Heart right ventricle (tissue), 16 donors: ENCODE measurements at regions of chr3 and their contacts with region 1.

Region 1: DNA sequence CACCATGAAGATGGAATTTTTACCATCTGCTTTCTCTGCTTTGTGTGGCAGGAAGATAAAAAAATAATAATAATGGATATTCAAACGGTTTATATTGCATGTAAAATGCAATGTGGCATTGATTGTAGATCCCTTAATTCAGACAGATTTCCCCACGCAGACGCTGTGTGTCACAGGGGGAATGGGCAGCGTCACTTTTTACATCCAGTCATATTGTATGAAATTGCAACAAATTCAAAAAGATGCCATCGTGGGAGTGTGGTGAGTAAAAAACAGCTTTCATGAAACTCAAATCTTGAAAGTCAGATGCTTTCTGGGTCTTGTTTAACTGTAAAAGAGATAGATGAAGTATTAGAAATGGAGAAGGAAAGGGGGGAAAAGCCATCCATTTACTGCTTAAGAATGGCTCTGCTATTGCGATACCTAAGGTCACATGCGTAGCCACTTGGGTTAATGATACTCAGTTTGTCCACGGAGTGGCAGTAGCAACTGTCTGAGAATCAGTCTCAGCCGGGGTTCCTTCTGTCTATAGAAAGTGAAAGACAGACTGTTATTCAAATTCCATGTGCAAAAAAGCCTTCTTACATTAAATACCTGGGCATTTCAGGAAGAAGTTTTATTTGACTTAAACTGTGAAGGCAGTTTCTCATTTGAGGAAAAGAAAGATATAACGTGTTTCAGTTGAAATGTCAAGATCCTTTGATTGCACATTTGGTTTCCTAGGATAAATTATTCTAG is 28.5 kb downstream of the BTD start:
- DNase-seq: peak in 1 of 2 donors; percentile 74
- ATAC-seq: peak; percentile 81 to 95 (median 92)
- H3K4me3 ChIP-seq: peak overlapping the region in 7 of 10 donors; percentile 6 to 48 (median 33)
- H3K27ac ChIP-seq: peak overlapping the region in 6 of 10 donors; percentile 8 to 70 (median 51)
- H3K4me1 ChIP-seq: peaks cover 0 to 44% (median 31%) of the 10 kb centered on the region in 9 donors
- H3K27me3 ChIP-seq: no peaks in the 10 kb centered on the region
- CTCF ChIP-seq: peak; percentile 63 to 89 (median 75)

Region 2: DNA sequence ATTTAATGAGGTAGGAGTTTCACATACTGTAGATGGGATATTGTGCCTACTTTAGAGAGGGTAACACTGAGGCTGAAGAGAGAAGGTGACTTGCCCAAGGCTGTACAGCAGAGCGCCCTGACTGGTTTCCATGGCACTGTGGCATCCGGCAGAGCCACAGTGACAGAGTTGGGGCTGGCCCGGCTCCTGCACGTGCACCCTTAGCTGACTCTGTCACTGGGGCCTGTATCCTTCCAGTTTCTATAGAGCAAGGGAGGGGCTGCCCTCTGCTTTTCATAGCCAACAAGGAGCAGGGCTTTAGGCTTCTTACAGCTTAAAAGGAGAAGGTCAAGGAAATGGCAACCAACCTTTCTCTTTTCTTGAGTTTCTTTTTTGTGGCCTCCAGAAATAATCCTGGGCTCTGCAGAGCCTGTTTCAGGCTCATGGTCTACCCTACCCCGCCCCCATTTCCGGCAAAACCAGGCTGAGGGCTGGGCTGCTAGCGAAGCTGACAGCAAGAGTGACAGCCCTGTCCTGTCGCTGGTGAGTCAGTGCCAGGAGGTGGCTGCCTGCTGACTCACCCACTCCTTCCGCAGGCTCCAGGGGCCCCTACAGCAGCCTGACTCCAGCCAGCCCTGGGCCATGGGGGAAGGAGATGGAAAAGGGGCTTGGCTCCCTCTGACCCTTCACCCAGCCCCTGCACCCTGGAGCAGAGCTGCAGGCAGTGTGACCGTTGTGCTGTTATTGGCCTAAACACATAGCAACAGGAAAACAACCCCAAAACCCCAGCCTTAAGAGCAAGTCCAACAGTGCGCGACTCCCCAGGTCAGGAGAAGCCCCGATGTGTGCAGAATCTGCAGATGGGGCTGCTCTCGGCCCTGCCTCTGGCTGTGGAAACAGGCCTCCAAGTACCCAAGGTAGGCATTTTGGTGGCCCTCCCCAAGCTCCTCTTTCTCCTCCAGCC is 1197.9 kb before region 1 on chr3:
- intact Hi-C with region 1: no loop called
- DNase-seq: peak; percentile 85 to 86
- ATAC-seq: peak; percentile 71 to 93 (median 84)
- H3K4me3 ChIP-seq: peak overlapping the region in 1 of 10 donors; percentile 29
- H3K27ac ChIP-seq: peak overlapping the region in 9 of 10 donors; percentile 64 to 95 (median 72)
- H3K4me1 ChIP-seq: peaks cover 22 to 98% (median 71%) of the 10 kb centered on the region in 9 donors
- H3K27me3 ChIP-seq: peaks cover 0 to 16% (median 0%) of the 10 kb centered on the region in 7 donors
- CTCF ChIP-seq: no peak

Region 3: GRCh38 chr3:15797642-15798303 is 167.7 kb after region 1 on chr3 and contains the start of gene ANKRD28:
- intact Hi-C with region 1: loop called in 1 of 10 experiments (anchors 5 kb)
- DNase-seq: no peak
- ATAC-seq: peak; percentile 59 to 81 (median 76)
- H3K4me3 ChIP-seq: peak within 1 kb of the TSS in 9 of 10 donors; percentile 2 to 48 (median 38)
- H3K27ac ChIP-seq: peak within 1 kb of the TSS in 9 of 10 donors; percentile 14 to 86 (median 64)
- H3K4me1 ChIP-seq: peaks cover 0 to 97% (median 20%) of the 10 kb centered on the region in 9 donors
- H3K27me3 ChIP-seq: no peaks in the 10 kb centered on the region
- CTCF ChIP-seq: peak in 4 of 9 donors; percentile 18 to 33 (median 22)
- total RNA-seq, gene ANKRD28: 21.4 to 30.8 (median 27.2) TPM

Region 4: GRCh38 chr3:15815696-15816095 is 185.7 kb after region 1 on chr3:
- intact Hi-C with region 1: loop called in 8 of 10 experiments (anchors 1 to 5 kb)
- DNase-seq: no peak
- ATAC-seq: peak in 5 of 8 donors; percentile 52 to 74 (median 69)
- H3K4me3 ChIP-seq: no peak overlapping the region
- H3K27ac ChIP-seq: no peak overlapping the region
- H3K4me1 ChIP-seq: peaks cover 0 to 23% (median 8%) of the 10 kb centered on the region in 9 donors
- H3K27me3 ChIP-seq: no peaks in the 10 kb centered on the region
- CTCF ChIP-seq: peak; percentile 5 to 77 (median 55)

Region 5: DNA sequence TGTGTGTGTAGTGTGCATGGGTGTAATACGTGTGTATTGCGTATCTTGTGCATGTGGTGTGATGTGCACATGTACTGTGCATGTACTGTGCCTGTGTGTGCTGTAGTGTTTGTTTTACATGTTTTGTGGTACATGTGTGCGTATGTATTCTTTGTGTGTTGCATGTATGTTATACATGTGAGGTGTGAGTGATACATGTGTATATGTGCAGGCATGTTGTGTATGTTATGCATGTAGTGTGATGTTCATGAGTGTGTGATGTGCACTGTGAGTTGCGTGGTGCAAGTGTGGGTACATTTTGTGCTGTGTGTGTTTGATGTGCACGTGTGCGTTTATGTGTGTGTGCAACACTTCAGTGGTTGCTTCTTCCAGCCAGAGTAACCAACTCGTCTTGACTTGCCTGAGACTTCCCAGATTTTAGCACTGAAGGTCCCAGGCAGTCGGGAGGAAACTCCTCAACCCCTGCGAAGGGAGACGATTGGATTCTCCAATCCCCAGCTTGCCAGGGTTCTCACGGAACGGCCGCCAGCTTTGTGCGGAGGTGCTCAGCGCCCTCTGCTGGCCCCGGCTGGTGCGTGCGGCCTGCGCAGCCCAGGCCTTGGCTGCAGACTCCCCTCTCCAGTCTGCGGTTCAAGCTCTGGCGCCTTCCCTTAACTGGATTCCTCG is 548.1 kb after region 1 on chr3:
- intact Hi-C with region 1: loop called in 1 of 10 experiments (anchors 10 kb)
- DNase-seq: peak; percentile 72 to 86
- ATAC-seq: peak; percentile 73 to 83 (median 78)
- H3K4me3 ChIP-seq: peak overlapping the region in 6 of 10 donors; percentile 23 to 42 (median 36)
- H3K27ac ChIP-seq: no peak overlapping the region
- H3K4me1 ChIP-seq: peaks cover 0 to 58% (median 35%) of the 10 kb centered on the region in 9 donors
- H3K27me3 ChIP-seq: peaks cover 0 to 7% (median 0%) of the 10 kb centered on the region in 7 donors
- CTCF ChIP-seq: peak; percentile 94 to 99 (median 98)

Region 6: DNA sequence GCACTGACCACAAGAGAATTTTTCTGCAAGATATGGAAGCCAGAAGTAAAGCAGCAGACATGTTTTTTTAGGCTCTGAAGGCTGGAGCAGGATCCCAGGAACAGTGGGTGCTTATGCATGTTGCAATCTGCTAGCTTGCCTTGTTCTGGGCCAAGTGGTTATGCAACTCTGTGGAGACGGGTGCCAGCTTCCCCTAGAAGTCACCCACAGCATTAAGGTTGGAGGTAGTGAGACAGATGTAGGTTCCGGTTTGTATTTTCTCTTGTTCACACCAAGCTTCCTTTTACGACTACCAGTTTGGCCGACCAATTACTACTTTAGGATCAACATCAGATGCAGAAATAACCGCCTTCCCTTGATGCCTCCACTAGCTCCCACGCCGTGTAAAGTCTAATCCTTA is 623.6 kb after region 1 on chr3:
- intact Hi-C with region 1: loop called in 8 of 10 experiments (anchors 5 to 10 kb)
- DNase-seq: peak; percentile 36 to 44
- ATAC-seq: peak; percentile 62 to 94 (median 84)
- H3K4me3 ChIP-seq: no peak overlapping the region
- H3K27ac ChIP-seq: peak overlapping the region in 2 of 10 donors; percentile 2 to 24
- H3K4me1 ChIP-seq: peaks cover 0 to 21% (median 4%) of the 10 kb centered on the region in 9 donors
- H3K27me3 ChIP-seq: no peaks in the 10 kb centered on the region
- CTCF ChIP-seq: no peak